ENCODE measurements at regions of chr10 and their contacts with region 1.

Region 1: DNA sequence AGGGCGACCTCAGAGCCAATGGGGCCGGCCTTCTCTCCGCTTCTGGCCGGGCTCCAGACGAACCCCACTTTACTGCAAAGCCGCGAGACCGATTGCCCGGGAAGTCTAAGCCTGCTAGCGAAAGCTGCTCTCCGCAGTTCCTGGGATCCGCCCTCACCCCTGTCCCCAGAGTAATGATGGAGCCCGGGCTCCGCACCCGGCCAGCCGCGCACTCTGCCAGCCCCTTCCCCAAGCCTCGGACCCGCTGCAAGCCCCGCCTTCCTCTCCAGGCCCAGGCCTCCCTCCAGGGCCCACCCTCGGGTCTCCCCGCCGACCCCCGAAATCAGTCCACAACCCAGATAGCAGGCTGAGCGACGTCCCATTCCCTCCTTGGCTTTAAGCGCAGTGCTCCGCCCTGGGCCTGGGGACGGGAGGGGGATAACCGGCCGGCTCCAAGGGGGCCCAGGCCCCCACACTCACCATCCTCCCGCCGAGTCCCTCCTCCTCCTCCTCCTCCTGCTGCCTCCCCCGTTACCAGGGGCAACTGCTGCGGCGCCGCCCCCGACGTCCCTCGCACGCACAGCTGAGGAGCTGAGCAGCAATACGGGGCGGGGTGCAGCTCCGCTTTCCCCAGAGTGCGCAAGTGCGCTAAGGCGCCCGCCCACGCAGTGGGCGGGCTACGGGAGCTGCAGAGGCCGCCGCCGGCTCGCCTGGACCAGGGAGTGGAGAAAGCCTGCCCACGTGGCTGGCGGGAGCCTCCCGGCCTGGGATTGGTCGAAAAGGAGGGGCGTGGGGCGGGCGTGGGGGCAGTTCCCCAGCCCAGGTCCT is at the start of gene ARL3:
- DNase-seq: peak; percentile 99
- H3K4me3 Mint-ChIP-seq: peak within 1 kb of the TSS; percentile 84
- H3K27ac Mint-ChIP-seq: peak within 1 kb of the TSS; percentile 85
- H3K4me1 Mint-ChIP-seq: peaks cover 63% of the 10 kb centered on the region
- H3K27me3 Mint-ChIP-seq: no peaks in the 10 kb centered on the region
- total RNA-seq, gene ARL3: 10.1 to 11.1 TPM

Region 2: DNA sequence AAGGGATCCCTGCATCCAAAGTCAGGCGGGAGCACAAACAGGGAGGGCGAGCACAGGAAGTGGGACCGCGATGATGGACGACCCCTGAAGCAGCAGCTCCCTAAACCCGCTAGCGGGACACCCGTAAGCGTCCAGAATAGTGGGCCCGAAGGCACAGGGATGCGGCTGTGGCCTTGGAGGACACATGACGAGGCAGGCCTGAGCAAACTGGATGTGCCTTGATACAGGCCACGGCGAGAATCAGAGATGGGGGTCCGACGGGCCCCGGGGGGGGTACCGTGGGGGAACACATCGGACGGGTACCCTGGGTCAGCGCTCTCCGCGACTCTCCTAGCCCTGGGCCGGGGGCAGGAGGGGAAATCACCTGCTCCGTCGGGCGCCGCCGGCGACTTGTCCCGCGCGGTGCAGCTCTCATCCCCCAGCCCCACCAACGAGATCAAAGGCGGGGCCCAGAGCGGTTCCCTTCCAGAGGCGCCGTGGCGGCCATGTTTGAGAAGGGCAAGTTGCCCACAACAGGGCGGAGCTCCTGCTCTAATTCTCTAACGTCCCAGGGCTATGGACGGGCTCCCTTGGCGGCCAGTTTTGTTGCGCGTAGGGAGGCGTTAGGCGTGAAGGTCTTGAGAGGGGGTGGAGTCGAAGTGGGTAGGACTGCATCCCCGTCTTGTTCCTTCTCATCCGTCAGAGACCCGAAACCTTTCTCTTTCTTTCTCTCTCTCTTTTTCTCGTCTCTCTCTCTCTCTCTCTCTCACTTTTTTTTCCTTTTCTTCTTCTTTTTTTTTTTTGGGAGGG is 281.7 kb before region 1 on chr10 and contains the start of gene CUEDC2:
- CTCF ChIA-PET with region 1: no interaction called
- POLR2A ChIA-PET with region 1: no interaction called
- intact Hi-C with region 1: loop called (anchors 5 kb)
- DNase-seq: peak; percentile 99
- H3K4me3 Mint-ChIP-seq: peak within 1 kb of the TSS; percentile 84
- H3K27ac Mint-ChIP-seq: peak within 1 kb of the TSS; percentile 88
- H3K4me1 Mint-ChIP-seq: peaks cover 42% of the 10 kb centered on the region
- H3K27me3 Mint-ChIP-seq: no peaks in the 10 kb centered on the region
- total RNA-seq, gene CUEDC2: 68.6 to 68.9 TPM

Region 3: DNA sequence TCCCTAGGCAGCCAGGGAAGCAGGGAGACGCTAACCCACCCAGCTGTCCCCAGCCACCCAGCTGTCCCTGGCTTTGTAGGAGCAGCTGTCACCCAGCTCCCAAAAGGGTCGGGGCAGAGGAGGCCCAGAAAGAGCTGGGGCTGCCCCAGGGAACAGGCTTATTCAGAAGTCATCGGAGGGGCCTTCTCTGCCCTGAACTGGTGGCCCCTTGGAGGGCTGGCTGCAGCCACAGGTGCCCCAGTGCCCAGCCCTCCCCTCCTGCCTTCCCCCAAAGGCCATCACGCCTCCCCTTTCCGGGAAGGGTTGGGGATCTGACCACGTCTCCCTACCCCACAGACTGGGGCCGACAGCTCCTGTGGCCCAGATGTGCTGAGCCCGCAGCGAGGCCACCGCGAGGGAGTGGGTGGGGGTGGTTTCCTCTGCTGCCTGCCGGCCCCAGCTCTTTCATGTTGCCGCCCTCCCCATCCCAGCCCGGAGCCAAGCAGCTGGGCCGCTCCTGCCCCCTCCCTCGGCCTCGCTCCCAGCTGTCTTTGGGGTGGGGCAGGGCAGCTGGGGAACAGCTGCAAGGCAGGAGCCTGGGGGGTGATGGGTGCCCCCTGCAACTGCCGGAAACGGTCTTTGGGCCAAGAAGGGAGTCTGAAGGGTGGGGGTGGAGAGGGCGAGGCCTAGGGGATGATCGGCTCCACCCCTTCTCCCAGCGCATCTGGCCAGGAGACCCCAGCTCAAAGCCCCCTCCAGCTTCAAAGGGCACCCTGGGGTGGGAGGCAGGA is 52.9 kb before region 1 on chr10:
- CTCF ChIA-PET with region 1: no interaction called
- POLR2A ChIA-PET with region 1: interaction called, 19 read pairs
- intact Hi-C with region 1: loop called (anchors 5 kb)
- DNase-seq: peak; percentile 88
- H3K4me3 Mint-ChIP-seq: peak overlapping the region; percentile 62
- H3K27ac Mint-ChIP-seq: peak overlapping the region; percentile 87
- H3K4me1 Mint-ChIP-seq: peaks cover 44% of the 10 kb centered on the region
- H3K27me3 Mint-ChIP-seq: no peaks in the 10 kb centered on the region

Region 4: DNA sequence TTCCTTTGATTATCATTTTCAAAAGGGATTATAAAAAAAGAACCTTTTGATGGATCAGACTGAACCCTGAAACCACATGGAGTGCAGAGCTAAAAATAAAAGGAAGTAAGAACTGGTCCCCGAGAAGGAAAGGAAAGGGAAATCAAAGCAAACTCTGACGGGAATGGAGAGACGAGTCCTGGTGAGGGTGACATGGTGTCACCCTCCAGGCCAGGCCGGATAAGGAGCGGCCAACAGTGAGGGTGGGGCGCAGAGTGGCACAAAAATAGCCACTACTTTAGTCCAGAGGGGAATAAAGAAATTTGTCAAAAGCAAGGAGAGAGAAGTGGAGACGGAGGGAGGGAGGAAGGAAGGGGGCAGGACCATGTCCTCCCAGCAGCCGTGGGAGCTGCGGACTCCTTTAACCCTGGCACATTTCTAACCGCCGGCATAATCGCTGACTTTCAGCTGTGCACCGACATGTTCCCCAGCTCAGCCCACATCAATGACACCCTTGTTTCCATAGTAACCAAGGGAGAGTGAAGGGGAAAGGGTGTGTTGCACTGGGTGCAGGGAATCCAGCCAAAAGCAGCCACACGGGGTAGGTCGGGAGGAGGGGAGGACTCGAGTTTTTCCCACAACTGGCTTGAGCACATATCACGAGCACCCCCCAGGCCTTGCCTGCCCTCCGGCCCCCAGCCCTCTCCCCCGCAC is 40.1 kb before region 1 on chr10:
- CTCF ChIA-PET with region 1: interaction called, 5 read pairs
- POLR2A ChIA-PET with region 1: interaction called, 17 read pairs
- intact Hi-C with region 1: loop called (anchors 2 kb)
- DNase-seq: peak; percentile 82
- H3K4me3 Mint-ChIP-seq: peak overlapping the region; percentile 64
- H3K27ac Mint-ChIP-seq: peak overlapping the region; percentile 34
- H3K4me1 Mint-ChIP-seq: peaks cover 33% of the 10 kb centered on the region
- H3K27me3 Mint-ChIP-seq: no peaks in the 10 kb centered on the region

Region 5: DNA sequence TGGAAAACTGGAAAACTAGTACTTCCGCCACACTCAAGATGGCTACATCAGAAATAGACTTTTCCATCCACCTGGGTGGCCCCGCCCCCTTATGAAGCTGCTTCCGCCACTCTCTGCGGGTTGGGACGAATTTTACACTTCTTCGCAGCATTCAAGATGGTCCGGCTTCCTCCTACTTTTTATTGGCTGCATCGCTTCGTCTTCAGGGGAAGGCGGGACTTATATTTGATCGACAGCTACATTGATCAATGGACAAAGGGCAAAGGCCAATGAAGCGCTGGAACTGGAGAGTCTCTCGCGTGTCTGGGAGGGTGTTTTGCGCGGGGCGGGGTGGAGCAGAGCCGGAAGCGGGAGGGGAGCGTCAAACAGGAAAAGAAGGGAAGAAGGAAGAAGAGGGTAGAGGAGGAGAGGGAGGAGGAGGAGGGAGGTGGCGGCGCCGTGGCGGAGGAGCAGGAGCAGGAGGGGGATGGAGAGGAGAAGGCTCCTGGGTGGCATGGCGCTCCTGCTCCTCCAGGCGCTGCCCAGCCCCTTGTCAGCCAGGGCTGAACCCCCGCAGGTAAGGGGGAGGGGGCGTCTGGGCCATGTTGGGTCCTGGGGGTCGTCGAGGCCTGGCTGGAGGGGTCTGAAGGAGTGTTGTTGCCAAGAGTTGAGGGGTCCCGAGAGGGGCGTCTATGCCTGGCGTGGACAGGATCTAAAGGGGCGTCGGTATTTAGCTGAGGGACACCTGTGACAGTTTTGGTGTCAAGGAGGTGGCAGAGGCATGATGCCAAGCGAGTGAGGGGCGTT is 29.8 kb after region 1 on chr10 and contains the start of gene WBP1L:
- CTCF ChIA-PET with region 1: interaction called, 13 read pairs
- POLR2A ChIA-PET with region 1: interaction called, 19 read pairs
- intact Hi-C with region 1: loop called (anchors 1 kb)
- DNase-seq: peak; percentile 97
- H3K4me3 Mint-ChIP-seq: peak within 1 kb of the TSS; percentile 98
- H3K27ac Mint-ChIP-seq: peak within 1 kb of the TSS; percentile 67
- H3K4me1 Mint-ChIP-seq: peaks cover 41% of the 10 kb centered on the region
- H3K27me3 Mint-ChIP-seq: no peaks in the 10 kb centered on the region
- total RNA-seq, gene WBP1L: 14.6 to 15.9 TPM

Measured in activated CD4-positive, alpha-beta memory T cell treated with anti-CD3 and anti-CD28 coated beads for 36 hours (primary cell).